Head of caudate nucleus (tissue), 42 donors: ENCODE measurements at regions of chr1 and their contacts with region 1.

Region 1: DNA sequence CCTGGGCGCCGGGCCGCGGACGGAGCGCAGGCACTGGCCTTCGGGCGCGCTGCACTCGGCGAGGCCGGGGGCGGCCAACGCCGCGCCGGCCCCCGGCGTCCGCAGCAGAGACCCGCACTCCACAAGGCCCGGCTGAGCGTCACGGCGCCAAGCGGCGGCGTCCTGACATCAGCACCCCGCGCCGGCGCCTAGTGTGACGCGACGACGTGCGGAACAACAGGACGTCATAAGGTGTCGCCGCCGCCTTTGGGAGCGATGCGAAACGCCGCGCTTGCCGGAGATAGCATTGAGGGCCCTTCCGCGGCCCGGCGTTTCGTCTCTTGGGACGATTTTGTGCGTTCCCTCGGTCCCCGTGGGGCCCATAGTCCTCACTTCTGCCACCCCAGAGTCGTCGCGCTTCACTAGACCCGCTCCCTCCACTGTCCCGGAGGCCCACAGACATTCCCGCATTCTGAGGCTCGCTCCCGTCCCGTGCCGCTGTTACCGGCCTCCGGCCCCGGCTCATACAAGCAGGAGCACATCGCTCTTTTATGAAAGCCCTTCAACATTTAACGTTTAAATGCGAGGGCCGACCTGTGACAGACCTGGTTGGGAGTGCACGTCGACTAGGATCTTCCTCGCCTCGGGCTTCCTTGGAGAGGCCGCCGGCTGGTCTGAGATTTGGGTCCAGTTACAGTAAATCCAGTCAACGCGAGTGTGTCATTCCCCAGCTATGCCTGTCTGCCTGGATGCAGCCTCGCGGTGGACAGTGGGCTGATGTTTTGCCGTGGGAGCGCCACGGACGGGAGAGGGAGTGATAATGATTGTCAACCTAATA is at the start of gene SSU72:
- DNase-seq: peak; percentile 79 to 97 (median 92)

Region 2: DNA sequence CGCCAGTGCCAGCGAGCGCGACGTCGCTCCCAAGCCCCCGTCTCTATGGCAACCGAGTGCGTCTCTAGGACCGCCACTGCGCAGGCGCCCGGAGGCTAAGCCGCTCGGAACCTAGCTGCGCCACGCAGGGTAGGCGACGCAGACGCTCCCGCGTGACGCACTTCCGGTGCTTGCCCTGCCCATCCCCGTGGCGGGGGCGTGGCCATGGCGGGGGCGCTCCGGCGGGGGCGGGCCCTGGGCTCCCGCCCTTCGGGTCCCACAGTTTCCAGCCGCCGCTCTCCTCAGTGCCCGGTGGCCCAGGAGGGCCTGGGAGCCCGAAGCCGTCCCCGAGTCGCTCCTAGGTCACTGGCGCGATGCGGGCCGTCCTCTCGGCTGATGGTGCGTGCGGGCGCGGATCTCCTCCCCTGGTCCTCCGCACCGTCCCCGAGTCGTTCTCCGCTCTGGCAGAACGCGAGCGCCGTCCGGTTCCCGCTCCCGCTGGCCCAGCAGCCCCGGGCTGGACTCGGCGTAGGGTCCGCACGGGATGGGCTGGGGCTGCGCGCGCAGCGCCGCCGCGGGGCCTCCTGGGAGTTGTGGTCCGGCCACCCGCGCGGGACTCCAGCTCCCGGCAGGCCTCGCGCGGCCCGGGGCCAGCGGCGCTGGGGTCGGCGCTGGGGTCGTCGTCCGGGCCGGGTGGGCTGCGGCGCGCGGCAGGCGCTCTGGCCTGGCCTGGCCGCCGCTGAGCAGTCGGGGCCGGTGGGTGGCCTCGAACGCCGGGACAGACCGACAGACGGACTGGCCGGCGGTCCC is 40.5 kb after region 1 on chr1 and contains the start of gene MIB2:
- intact Hi-C with region 1: loop called (anchors 5 kb)
- DNase-seq: peak; percentile 86 to 99 (median 97)